ENCODE measurements at regions of chr14 and their contacts with region 1.

Region 1: DNA sequence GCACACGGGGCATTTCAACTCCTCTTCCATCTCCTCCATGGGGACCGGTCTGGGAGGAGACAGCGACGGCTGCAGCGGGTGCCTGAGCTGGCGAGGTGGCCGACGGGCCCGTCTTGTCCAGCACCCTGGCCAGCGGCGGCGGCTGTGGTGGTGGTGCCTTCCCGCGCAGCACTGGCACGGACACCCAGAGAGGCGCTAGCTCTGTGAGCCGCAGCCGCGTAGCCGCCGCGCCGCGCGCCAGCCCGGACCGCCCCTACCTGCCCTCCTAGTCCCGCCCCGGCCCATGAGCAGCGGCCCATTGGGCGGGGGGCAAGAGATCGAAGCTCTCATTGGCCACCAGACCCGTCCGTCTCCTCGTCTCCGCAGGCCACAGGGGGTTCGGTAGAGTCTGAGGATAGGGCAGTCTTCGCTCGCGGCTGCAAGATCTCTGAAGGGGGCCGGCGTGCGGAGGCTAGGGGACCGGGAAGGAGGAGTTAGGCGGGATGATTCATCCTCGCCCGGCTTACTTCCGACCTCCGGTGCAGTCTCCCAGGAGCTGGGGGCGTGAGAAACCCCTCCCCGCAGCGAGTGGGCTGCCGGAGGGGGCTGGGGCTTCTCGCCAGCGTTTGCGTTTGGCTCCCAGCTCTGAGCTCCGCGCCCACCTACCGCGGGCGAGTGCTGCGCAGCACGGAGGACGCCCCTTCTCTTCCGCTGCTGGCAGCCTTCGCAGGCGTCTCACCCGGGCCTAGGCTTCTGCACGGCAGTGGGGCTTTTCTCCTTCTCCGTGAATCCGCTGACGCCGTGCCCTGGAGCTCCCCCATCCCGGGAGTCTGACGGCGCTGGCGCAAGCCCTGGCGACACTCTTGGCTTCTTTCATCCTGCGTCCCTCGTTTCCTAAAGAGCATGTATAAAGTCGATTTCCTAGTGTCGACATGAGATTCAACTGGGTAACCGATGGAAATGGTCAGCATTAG is at the start of gene TRIM9:
- DNase-seq: peak; percentile 99
- ATAC-seq: peak; percentile 97
- H3K4me3 ChIP-seq: peak within 1 kb of the TSS; percentile 66
- H3K27ac ChIP-seq: peak within 1 kb of the TSS; percentile 45
- H3K4me1 ChIP-seq: peaks cover 12% of the 10 kb centered on the region; the same call in 1 of the 2 replicates
- H3K27me3 ChIP-seq: no peaks in the 10 kb centered on the region
- CTCF ChIP-seq: no peak
- total RNA-seq, gene TRIM9: 2.5 and 2.6 TPM in 2 replicates

Region 2: GRCh38 chr14:50901361-50901760 is 193.8 kb before region 1 on chr14:
- CTCF ChIA-PET with region 1: no interaction called
- POLR2A ChIA-PET with region 1: no interaction called
- intact Hi-C with region 1: no loop called
- DNase-seq: no peak
- ATAC-seq: no peak
- H3K4me3 ChIP-seq: no peak overlapping the region
- H3K27ac ChIP-seq: no peak overlapping the region
- H3K4me1 ChIP-seq: peaks cover 10% of the 10 kb centered on the region; the same call in 1 of the 2 replicates
- H3K27me3 ChIP-seq: no peaks in the 10 kb centered on the region
- CTCF ChIP-seq: no peak

Region 3: DNA sequence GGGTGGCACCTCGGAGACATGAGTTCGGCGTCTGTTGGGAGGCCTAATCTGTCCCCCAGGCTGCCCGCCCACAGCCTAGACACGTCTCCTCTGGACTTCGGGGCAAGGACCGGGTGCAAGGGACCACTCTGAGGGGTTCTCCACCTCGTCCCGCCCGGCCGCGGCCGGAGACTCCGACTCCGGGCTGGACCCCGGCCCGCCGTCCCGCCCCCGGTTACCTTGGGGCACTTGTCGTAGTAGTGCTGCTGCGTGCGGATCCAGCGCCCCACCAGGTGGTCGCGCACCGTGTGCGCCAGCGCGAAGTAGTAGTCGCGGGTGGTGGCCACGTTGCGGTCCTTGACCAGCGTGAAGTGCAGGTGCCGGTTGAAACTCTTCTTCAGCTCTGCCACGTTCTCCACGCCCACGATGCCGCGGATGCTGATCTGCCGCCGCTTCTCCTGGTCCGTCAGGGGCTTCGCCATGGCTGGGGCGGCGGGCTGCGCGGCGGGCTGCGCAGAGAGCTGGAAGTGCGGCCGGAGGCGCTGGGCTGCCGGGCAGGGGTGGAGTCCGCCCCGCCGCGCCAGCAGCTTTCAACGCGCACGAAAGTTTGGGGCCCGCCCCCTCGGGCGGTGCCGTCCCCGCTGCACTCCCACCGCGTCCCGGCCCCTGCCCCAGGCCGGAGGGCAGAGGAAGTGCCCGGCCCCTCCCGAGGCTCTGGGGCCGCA is 151.1 kb before region 1 on chr14 and contains the start of gene PYGL:
- CTCF ChIA-PET with region 1: no interaction called
- POLR2A ChIA-PET with region 1: interaction called, 3 read pairs
- intact Hi-C with region 1: loop called (anchors 2 kb)
- DNase-seq: peak; percentile 88
- ATAC-seq: peak; percentile 76
- H3K4me3 ChIP-seq: peak within 1 kb of the TSS; percentile 97
- H3K27ac ChIP-seq: peak within 1 kb of the TSS; percentile 57
- H3K4me1 ChIP-seq: peaks cover 19% of the 10 kb centered on the region
- H3K27me3 ChIP-seq: no peaks in the 10 kb centered on the region
- CTCF ChIP-seq: no peak
- total RNA-seq, gene PYGL: 163 and 174 TPM in 2 replicates

Region 4: GRCh38 chr14:51014086-51014485 is 81.1 kb before region 1 on chr14:
- CTCF ChIA-PET with region 1: no interaction called
- POLR2A ChIA-PET with region 1: interaction called, 3 read pairs
- intact Hi-C with region 1: loop called (anchors 1 kb)
- DNase-seq: peak; percentile 89
- ATAC-seq: peak; percentile 92
- H3K4me3 ChIP-seq: peak overlapping the region; percentile 26; the same call in 1 of the 2 replicates
- H3K27ac ChIP-seq: peak overlapping the region; percentile 91
- H3K4me1 ChIP-seq: peaks cover 21% of the 10 kb centered on the region
- H3K27me3 ChIP-seq: no peaks in the 10 kb centered on the region
- CTCF ChIP-seq: no peak

Region 5: GRCh38 chr14:51157012-51157411 is 61.8 kb after region 1 on chr14:
- CTCF ChIA-PET with region 1: no interaction called
- POLR2A ChIA-PET with region 1: no interaction called
- intact Hi-C with region 1: loop called (anchors 5 kb)
- DNase-seq: peak; percentile 75
- ATAC-seq: peak; percentile 98
- H3K4me3 ChIP-seq: no peak overlapping the region
- H3K27ac ChIP-seq: no peak overlapping the region
- H3K4me1 ChIP-seq: peaks cover 11% of the 10 kb centered on the region
- H3K27me3 ChIP-seq: no peaks in the 10 kb centered on the region
- CTCF ChIP-seq: peak; percentile 91

Region 6: GRCh38 chr14:51219473-51220448 is 124.6 kb after region 1 on chr14:
- CTCF ChIA-PET with region 1: no interaction called
- POLR2A ChIA-PET with region 1: no interaction called
- intact Hi-C with region 1: loop called (anchors 1 kb)
- DNase-seq: peak; percentile 63
- ATAC-seq: peak; percentile 65
- H3K4me3 ChIP-seq: no peak overlapping the region
- H3K27ac ChIP-seq: no peak overlapping the region
- H3K4me1 ChIP-seq: no peaks in the 10 kb centered on the region
- H3K27me3 ChIP-seq: no peaks in the 10 kb centered on the region
- CTCF ChIP-seq: peak; percentile 90